ENCODE measurements at regions of chr2 and their contacts with region 1.

Region 1: DNA sequence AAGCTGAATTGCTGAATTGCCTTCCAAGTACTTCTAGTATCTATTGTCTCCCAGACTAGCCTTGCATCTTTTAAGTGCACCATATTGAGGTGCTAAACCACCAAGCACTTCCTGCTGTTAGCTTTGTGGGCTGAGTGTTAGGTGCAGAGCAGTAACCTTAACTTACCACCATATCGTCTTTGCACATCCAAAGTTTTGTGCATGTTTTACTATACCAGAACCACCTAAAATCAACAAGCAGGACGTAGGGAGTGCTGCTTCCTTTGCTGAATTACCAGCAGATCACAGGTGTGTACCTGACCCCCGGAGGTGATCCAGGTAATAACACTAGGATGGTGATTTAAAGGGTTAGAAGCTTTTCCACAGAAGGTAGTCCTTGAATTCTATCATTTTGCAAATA is 359.9 kb upstream of the HNRNPA3 start:
- DNase-seq: no peak
- H3K4me3 ChIP-seq: no peak overlapping the region
- H3K27ac ChIP-seq: no peak overlapping the region
- H3K4me1 ChIP-seq: no peaks in the 10 kb centered on the region
- H3K27me3 ChIP-seq: no peaks in the 10 kb centered on the region
- CTCF ChIP-seq: no peak

Region 2: DNA sequence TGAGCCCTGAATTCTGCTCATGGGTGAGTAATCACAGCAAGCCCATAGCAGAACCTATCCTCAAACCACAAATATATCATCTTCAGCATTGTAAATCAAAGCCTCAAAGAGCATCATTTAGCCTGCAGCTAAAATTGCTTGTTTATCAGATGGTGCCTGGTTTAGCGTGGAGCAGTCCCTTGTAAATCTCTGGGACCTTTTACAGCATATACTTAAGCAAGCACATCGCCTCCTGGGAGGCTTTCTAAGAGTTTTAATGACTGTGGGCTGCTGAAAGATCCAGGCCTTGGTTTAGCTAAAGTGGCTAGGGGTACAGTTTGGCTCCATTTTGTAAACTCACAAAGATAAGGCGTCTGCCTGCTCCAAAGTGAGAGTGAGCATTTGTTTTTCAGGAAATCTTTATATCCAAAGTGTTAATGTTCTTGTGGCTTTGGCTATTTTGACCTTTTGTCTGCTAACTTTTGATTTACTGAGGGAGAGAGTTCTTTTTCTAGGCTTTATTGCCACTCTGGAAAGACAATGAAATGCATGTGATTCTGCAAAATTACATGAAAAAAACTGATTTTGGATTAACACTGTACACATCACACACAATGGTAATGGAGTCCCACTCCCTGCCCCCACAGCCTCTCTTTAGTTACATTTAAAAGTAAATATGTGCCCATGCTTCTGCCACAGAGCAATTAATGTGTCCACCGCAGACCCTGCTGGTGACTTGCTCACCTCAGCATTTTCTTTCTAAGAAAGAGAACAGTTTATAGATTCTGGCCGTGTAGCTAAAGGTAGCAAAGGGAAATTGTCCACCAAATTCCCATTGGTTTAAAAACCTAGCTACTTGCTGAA is 1045.4 kb before region 1 on chr2:
- intact Hi-C with region 1: loop called (anchors 5 kb)
- DNase-seq: no peak
- H3K4me3 ChIP-seq: no peak overlapping the region
- H3K27ac ChIP-seq: no peak overlapping the region
- H3K4me1 ChIP-seq: peaks cover 0 to 5% (median 2%) of the 10 kb centered on the region in 4 donors
- H3K27me3 ChIP-seq: no peaks in the 10 kb centered on the region
- CTCF ChIP-seq: no peak

Region 3: GRCh38 chr2:176830362-176830761 is 22.3 kb before region 1 on chr2:
- intact Hi-C with region 1: no loop called
- DNase-seq: no peak
- H3K4me3 ChIP-seq: no peak overlapping the region
- H3K27ac ChIP-seq: no peak overlapping the region
- H3K4me1 ChIP-seq: peaks cover 0 to 6% (median 3%) of the 10 kb centered on the region in 4 donors
- H3K27me3 ChIP-seq: no peaks in the 10 kb centered on the region
- CTCF ChIP-seq: no peak